Activated CD4-positive, alpha-beta memory T cell treated with anti-CD3 and anti-CD28 coated beads for 36 hours (primary cell): ENCODE measurements at regions of chr2 and their contacts with region 1.

Region 1: GRCh38 chr2:218257390-218257981 is 3.3 kb upstream of the GPBAR1 start:
- DNase-seq: peak; percentile 85
- H3K4me3 Mint-ChIP-seq: no peak overlapping the region
- H3K27ac Mint-ChIP-seq: peak overlapping the region; percentile 84
- H3K4me1 Mint-ChIP-seq: peaks cover 25% of the 10 kb centered on the region
- H3K27me3 Mint-ChIP-seq: no peaks in the 10 kb centered on the region

Region 2: GRCh38 chr2:218168635-218169462 is 88.6 kb before region 1 on chr2:
- CTCF ChIA-PET with region 1: interaction called, 3 read pairs
- POLR2A ChIA-PET with region 1: no interaction called
- intact Hi-C with region 1: loop called (anchors 5 kb)
- DNase-seq: peak; percentile 75
- H3K4me3 Mint-ChIP-seq: no peak overlapping the region
- H3K27ac Mint-ChIP-seq: no peak overlapping the region
- H3K4me1 Mint-ChIP-seq: peaks cover 17% of the 10 kb centered on the region
- H3K27me3 Mint-ChIP-seq: no peaks in the 10 kb centered on the region

Region 3: DNA sequence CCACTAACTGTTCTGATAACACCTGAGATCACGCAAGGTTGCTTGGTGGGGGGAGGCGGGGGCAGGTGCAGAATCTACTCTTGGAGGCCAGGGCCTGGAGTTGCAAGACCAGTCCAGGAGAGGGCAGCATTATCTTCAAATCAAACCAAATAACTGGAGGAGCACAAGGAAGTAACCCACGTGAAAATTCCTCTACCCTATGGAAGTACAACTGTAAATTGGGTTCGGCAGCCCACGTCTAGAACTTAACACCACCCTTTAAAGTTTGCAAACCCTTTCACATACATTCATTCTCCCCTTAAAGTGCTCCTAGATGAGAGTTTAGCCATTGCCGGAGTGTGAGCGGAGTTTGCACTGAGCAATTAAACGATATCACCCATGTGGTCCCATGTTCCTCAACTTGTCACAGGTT is 71.1 kb before region 1 on chr2:
- CTCF ChIA-PET with region 1: interaction called, 10 read pairs
- POLR2A ChIA-PET with region 1: interaction called, 11 read pairs
- intact Hi-C with region 1: loop called (anchors 1 kb)
- DNase-seq: peak; percentile 81
- H3K4me3 Mint-ChIP-seq: no peak overlapping the region
- H3K27ac Mint-ChIP-seq: no peak overlapping the region
- H3K4me1 Mint-ChIP-seq: peaks cover 6% of the 10 kb centered on the region
- H3K27me3 Mint-ChIP-seq: no peaks in the 10 kb centered on the region

Region 4: DNA sequence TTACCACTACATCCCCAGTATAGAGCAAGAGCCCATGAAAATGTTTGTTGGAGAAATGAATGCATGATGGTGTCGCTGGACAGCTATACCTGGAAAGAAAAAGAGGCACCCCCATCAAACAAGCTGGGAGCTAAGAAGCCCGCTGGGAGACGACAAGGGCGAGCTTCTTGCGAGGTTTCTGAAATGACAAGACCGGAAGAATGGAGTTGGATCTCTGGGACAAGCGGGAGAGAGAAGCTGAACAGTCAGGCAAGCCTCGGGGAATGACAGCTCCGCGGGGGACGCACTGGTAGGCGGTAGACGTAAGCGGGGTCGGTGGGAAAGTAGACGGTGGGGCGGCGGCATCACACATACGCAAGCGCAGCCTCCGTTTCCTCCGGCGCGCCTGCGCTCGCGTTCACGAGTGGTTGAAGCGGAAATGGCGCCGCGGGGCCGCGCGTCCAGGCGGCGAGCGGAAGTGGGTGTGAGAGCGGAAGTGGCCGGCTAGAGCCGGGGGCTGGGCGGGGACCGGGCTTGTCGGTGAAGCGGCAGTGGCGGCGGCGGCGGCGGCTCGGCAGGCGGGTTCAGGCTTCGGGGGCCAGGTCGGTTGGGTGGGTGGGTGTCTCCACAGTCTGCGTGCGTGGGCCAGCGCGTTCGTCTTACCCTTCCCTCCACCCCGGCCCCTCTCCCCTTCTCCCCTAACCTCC is 40.7 kb before region 1 on chr2 and contains the start of gene ARPC2:
- CTCF ChIA-PET with region 1: interaction called, 8 read pairs
- POLR2A ChIA-PET with region 1: interaction called, 3 read pairs
- intact Hi-C with region 1: loop called (anchors 1 kb)
- DNase-seq: peak; percentile 97
- H3K4me3 Mint-ChIP-seq: peak within 1 kb of the TSS; percentile 83
- H3K27ac Mint-ChIP-seq: peak within 1 kb of the TSS; percentile 91
- H3K4me1 Mint-ChIP-seq: peaks cover 34% of the 10 kb centered on the region
- H3K27me3 Mint-ChIP-seq: no peaks in the 10 kb centered on the region
- total RNA-seq, gene ARPC2: 564 to 570 TPM

Region 5: GRCh38 chr2:218224186-218224585 is 33.3 kb before region 1 on chr2:
- CTCF ChIA-PET with region 1: interaction called, 27 read pairs
- POLR2A ChIA-PET with region 1: interaction called, 3 read pairs
- intact Hi-C with region 1: loop called (anchors 2 kb)
- DNase-seq: no peak
- H3K4me3 Mint-ChIP-seq: peak overlapping the region; percentile 22
- H3K27ac Mint-ChIP-seq: peak overlapping the region; percentile 77
- H3K4me1 Mint-ChIP-seq: peaks cover 92% of the 10 kb centered on the region
- H3K27me3 Mint-ChIP-seq: no peaks in the 10 kb centered on the region

Region 6: DNA sequence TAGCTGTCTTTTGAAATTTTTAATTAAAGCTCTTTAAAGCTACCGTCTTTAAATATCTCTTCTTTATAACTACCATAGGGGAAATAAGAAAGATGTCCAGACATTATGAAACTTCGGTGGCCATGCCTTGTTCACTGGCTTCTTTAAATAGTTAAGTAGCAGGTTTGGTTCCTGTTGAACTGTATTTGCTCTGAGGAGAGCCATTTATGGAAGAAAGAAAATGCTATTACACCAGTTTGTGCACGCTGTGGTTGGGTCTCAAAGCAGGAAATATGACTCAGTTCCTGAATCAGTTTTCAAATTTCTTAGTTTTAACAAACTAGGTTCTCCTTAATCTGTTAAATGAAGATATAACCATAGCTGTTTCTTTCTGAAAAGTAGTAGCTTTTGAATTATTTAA is 28.2 kb before region 1 on chr2:
- CTCF ChIA-PET with region 1: interaction called, 27 read pairs
- POLR2A ChIA-PET with region 1: interaction called, 3 read pairs
- intact Hi-C with region 1: loop called (anchors 2 kb)
- DNase-seq: peak; percentile 63
- H3K4me3 Mint-ChIP-seq: peak overlapping the region; percentile 4
- H3K27ac Mint-ChIP-seq: peak overlapping the region; percentile 91
- H3K4me1 Mint-ChIP-seq: peaks cover 74% of the 10 kb centered on the region
- H3K27me3 Mint-ChIP-seq: no peaks in the 10 kb centered on the region

Region 7: GRCh38 chr2:218343591-218343990 is 86.1 kb after region 1 on chr2:
- CTCF ChIA-PET with region 1: no interaction called
- POLR2A ChIA-PET with region 1: no interaction called
- intact Hi-C with region 1: no loop called
- DNase-seq: no peak
- H3K4me3 Mint-ChIP-seq: no peak overlapping the region
- H3K27ac Mint-ChIP-seq: no peak overlapping the region
- H3K4me1 Mint-ChIP-seq: no peaks in the 10 kb centered on the region
- H3K27me3 Mint-ChIP-seq: no peaks in the 10 kb centered on the region

Region 8: DNA sequence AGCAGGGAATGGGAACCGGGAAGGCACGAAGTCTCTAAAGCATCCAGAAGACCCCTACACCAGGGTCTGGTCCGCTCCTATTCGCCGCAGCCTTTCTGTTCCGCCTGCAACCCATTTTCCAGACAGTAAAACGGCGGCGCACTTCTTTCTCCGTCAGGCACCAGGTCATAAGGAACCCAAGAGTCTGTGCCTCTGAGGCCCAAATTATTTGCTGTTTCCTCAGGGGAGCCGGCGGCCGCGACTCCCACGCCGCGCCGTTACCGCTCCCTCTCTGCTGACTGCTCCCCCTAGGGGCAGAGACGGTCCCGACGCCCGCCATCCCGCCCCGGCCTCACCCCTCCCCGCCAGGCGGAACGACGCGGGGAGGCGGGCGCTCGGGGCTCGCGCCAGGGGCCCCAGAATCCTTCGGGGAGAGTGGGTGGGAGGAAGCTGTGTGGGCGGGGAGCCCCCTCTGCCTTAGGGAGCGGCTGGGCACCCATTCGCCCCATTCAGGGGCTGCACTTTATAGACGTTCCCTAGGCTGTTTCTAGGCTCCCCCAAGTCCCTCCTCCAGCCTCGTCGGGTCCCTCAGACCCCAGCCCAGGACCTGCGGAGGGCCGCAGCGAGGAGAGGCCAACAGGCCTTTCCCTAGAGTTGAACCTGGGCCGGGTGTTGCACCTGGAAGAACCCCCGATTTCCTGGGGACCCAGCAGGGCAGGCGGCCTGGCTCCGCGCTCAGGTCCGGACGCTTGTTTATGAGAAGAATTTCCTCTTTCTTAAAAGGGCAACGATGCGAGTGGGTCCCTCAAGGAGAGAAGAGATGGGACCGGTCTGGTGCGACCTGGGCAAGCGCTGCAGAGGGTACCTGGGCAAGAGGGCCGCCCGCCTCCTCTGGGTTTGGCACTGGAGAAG is 138.6 kb after region 1 on chr2:
- CTCF ChIA-PET with region 1: no interaction called
- POLR2A ChIA-PET with region 1: no interaction called
- intact Hi-C with region 1: no loop called
- DNase-seq: peak; percentile 96
- H3K4me3 Mint-ChIP-seq: peak overlapping the region; percentile 90
- H3K27ac Mint-ChIP-seq: peak overlapping the region; percentile 88
- H3K4me1 Mint-ChIP-seq: peaks cover 34% of the 10 kb centered on the region
- H3K27me3 Mint-ChIP-seq: no peaks in the 10 kb centered on the region

Region 9: DNA sequence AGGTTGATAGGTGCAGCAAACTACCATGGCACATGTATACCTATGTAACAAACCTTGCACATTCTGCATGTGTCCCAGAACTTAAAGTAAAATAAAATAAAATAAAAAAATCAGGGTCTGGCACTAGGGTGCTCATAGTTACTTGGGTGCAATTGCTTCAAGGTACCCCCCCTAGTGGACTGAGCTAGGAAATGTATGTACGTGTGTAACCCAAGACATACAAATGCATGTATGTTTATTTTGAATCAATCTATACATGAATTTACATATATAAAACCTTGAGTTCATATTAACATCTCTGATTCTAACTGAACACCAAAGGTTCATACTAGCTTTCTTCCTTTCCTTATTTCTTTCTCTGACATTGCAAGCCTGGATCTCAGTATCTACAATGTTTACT is 259.1 kb after region 1 on chr2:
- CTCF ChIA-PET with region 1: no interaction called
- POLR2A ChIA-PET with region 1: no interaction called
- intact Hi-C with region 1: no loop called
- DNase-seq: no peak
- H3K4me3 Mint-ChIP-seq: no peak overlapping the region
- H3K27ac Mint-ChIP-seq: no peak overlapping the region
- H3K4me1 Mint-ChIP-seq: peaks cover 31% of the 10 kb centered on the region
- H3K27me3 Mint-ChIP-seq: no peaks in the 10 kb centered on the region